ENCODE measurements at regions of chr5 and their contacts with region 1.

Region 1: DNA sequence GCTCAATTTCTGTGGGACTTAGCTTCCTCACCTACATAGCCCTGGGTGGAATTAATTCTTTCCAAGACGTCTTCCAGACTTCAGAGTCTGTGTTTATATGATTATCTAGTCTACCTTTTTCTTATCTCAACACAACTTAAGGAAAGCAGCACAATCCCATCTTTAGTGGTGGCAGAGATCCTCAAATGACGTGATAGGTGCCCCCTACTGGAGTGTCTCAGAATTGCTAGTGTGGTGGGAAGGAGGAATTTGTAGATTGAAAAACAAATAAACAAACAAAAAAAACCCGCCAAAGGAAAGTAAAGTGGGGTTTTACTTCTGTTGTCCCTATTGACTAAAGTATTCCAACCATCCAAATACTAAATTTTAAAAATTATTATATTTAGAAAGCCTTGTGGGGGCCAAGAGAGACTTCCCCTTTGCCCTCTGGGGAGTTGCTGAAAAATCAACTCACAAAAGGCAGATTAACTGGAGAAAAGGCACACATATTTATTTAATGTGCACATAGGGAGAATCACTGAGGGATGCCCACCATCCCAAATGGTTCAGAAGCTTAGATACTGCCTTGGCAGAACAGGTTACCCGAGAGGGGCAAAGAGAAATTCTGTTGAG is 283.3 kb downstream of the TMEM167A start:
- DNase-seq: peak in 26 of 42 donors; percentile 9 to 82 (median 39)

Region 2: GRCh38 chr5:82218374-82219156 is 575.3 kb before region 1 on chr5:
- intact Hi-C with region 1: no loop called
- DNase-seq: peak in 3 of 42 donors; percentile 6 to 26 (median 12)

Region 3: GRCh38 chr5:82641331-82642003 is 152.4 kb before region 1 on chr5:
- intact Hi-C with region 1: loop called (anchors 10 kb)
- DNase-seq: peak in 41 of 42 donors; percentile 11 to 89 (median 66)

Measured in head of caudate nucleus (tissue), 42 donors.